Activated CD4-positive, alpha-beta memory T cell treated with anti-CD3 and anti-CD28 coated beads, Interleukin-2, amount 10 ng/mL, durations not matched to agents 7 days and 5 days (primary cell): ENCODE measurements at regions of chr19 and their contacts with region 1.

Region 1: GRCh38 chr19:10259162-10259905 is 7.3 kb downstream of the MRPL4 start:
- DNase-seq: peak; percentile 94
- H3K4me3 Mint-ChIP-seq: no peak overlapping the region
- H3K27ac Mint-ChIP-seq: peak overlapping the region; percentile 84
- H3K4me1 Mint-ChIP-seq: peaks cover 34% of the 10 kb centered on the region
- H3K27me3 Mint-ChIP-seq: no peaks in the 10 kb centered on the region

Region 2: GRCh38 chr19:10230861-10231611 is 28.3 kb before region 1 on chr19 and contains the start of gene S1PR2:
- CTCF ChIA-PET with region 1: interaction called, 6 read pairs
- POLR2A ChIA-PET with region 1: interaction called, 11 read pairs
- DNase-seq: peak; percentile 71
- H3K4me3 Mint-ChIP-seq: peak within 1 kb of the TSS; percentile 86
- H3K27ac Mint-ChIP-seq: peak within 1 kb of the TSS; percentile 52
- H3K4me1 Mint-ChIP-seq: peaks cover 24% of the 10 kb centered on the region
- H3K27me3 Mint-ChIP-seq: no peaks in the 10 kb centered on the region
- total RNA-seq, gene S1PR2: 9.5 to 10.6 TPM

Region 3: GRCh38 chr19:10292206-10292788 is 33.0 kb after region 1 on chr19:
- CTCF ChIA-PET with region 1: interaction called, 11 read pairs
- POLR2A ChIA-PET with region 1: interaction called, 3 read pairs
- DNase-seq: peak; percentile 80
- H3K4me3 Mint-ChIP-seq: peak overlapping the region; percentile 65
- H3K27ac Mint-ChIP-seq: peak overlapping the region; percentile 56
- H3K4me1 Mint-ChIP-seq: peaks cover 73% of the 10 kb centered on the region
- H3K27me3 Mint-ChIP-seq: peaks cover 82% of the 10 kb centered on the region

Region 4: DNA sequence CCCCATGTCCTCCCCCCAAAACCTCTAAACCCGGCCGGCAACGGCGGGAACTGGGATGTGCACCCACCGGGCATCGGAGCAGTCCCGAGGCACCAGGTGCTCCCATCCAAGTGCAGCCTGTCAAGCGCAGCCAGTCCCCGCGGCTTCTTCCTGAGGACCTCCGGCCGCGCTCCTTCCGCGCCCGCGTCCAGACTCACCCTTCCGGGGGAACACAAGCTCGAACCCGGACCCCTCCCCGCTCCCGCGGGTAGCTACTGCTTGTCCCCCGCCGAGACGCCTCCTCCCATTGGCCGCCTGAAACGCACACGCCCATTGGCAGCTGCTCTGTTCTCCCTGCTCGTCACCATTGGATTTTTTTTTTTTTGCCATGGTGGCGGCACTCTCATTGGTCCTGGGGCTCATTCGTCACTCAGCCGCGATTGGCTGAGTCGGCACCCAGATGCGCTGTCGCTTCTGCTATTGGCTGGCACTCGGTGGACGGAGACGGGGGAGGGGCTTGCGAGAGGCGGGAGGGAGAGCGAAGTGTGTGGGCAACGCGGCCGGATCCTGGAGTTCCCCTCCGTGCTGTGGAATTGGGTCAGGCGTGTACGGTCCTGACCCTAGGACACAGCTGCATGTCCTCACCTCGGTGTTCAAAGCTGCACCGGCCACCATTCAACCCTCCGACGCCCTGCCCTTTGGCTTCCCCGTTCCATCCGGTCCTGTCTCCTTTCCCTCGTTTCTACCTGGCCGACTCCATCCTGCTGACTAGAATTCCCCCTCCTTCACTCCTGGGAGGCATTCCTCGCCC is 121.2 kb after region 1 on chr19 and contains the start of gene TYK2:
- CTCF ChIA-PET with region 1: interaction called, 131 read pairs
- POLR2A ChIA-PET with region 1: interaction called, 7 read pairs
- DNase-seq: peak; percentile 95
- H3K4me3 Mint-ChIP-seq: peak within 1 kb of the TSS; percentile 95
- H3K27ac Mint-ChIP-seq: peak within 1 kb of the TSS; percentile 90
- H3K4me1 Mint-ChIP-seq: peaks cover 27% of the 10 kb centered on the region
- H3K27me3 Mint-ChIP-seq: no peaks in the 10 kb centered on the region
- total RNA-seq, gene TYK2: 226 to 243 TPM

Region 5: GRCh38 chr19:10388957-10389356 is 129.6 kb after region 1 on chr19:
- CTCF ChIA-PET with region 1: interaction called, 238 read pairs
- POLR2A ChIA-PET with region 1: interaction called, 17 read pairs
- DNase-seq: peak; percentile 81
- H3K4me3 Mint-ChIP-seq: no peak overlapping the region
- H3K27ac Mint-ChIP-seq: peak overlapping the region; percentile 11
- H3K4me1 Mint-ChIP-seq: peaks cover 7% of the 10 kb centered on the region
- H3K27me3 Mint-ChIP-seq: no peaks in the 10 kb centered on the region

Region 6: GRCh38 chr19:10403137-10404021 is 144.0 kb after region 1 on chr19 and contains the start of gene CDC37:
- CTCF ChIA-PET with region 1: interaction called, 12 read pairs
- POLR2A ChIA-PET with region 1: interaction called, 8 read pairs
- DNase-seq: peak; percentile 98
- H3K4me3 Mint-ChIP-seq: peak within 1 kb of the TSS; percentile 83
- H3K27ac Mint-ChIP-seq: peak within 1 kb of the TSS; percentile 95
- H3K4me1 Mint-ChIP-seq: peaks cover 61% of the 10 kb centered on the region
- H3K27me3 Mint-ChIP-seq: no peaks in the 10 kb centered on the region
- total RNA-seq, gene CDC37: 239 to 244 TPM

Region 7: DNA sequence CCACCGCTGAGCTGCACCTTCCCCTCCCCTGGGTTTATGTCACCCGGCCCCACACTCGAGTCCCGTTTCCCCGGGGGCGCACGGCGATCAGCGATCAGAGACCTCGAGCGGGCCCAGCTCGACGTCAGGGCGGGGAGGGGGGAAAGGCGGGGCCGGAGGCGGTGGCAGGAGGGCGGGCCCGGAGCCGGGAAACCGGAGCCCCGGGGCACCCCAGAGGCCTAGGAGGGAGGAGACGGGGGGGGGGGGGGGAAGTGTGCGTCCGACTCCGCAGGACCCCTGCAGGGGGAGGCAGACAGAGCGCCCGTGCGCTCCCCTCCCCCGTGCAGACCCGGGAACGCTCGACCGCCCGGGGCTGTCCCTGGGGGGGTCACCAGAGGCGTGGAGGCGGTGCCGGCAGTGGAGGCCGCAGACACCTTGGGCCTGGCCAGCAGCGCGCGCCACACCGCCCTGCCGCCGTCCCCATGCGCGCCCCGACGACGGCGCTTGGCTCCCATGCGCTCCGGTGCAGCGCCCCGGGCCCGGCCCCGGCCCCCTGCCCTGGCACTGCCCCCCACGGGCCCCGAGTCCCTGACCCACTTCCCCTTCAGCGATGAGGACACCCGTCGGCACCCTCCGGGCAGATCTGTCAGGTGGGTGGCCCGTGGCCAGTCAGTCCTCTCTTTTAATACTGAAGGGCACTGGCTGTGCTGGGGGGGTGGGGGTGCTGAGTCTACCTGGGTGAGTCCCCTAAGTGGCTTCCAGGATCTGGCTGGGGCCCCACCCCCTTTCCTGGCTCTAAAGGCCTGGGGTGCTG is 172.8 kb after region 1 on chr19:
- CTCF ChIA-PET with region 1: interaction called, 11 read pairs
- POLR2A ChIA-PET with region 1: interaction called, 4 read pairs
- DNase-seq: peak; percentile 69
- H3K4me3 Mint-ChIP-seq: peak overlapping the region; percentile 67
- H3K27ac Mint-ChIP-seq: peak overlapping the region; percentile 73
- H3K4me1 Mint-ChIP-seq: peaks cover 74% of the 10 kb centered on the region
- H3K27me3 Mint-ChIP-seq: peaks cover 17% of the 10 kb centered on the region